H1 (cell line): ENCODE measurements at regions of chr11 and their contacts with region 1.

Region 1: GRCh38 chr11:7442588-7443215 is 42.6 kb upstream of the OLFML1 start:
- DNase-seq: peak; percentile 70 to 91
- H3K4me3 ChIP-seq: no peak overlapping the region
- H3K27ac ChIP-seq: no peak overlapping the region
- H3K4me1 ChIP-seq: no peaks in the 10 kb centered on the region
- H3K27me3 ChIP-seq: peaks cover 0 to 1% (median 0%) of the 10 kb centered on the region in 4 experiments; a peak in 3 of 7 replicates
- CTCF ChIP-seq: peak; percentile 83 to 90 (median 89)
- EP300 ChIP-seq: no peak
- POLR2A ChIP-seq: no peak
- RAD21 ChIP-seq: peak; percentile 98 to 99

Region 2: DNA sequence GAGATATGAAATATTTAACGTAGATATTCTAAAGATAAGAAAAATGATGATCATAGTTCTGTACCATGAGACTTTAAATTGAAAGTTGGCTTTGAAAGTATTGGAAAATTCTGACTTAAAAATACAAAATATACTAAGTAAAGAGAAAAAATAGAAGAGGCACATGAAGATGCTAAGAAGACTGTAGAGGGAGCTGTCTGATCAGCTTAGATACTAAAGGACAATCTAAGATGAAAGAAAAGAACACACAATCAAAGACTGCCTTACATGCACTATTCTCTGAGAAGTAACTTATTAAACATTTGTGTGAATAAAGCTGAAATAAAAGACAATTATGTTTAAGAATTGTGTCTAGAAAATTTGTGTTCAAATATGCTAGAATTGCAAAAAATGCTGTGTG is 298.8 kb before region 1 on chr11:
- CTCF ChIA-PET with region 1: interaction called, 29 read pairs
- POLR2A ChIA-PET with region 1: no interaction called
- DNase-seq: no peak
- H3K4me3 ChIP-seq: no peak overlapping the region
- H3K27ac ChIP-seq: no peak overlapping the region
- H3K4me1 ChIP-seq: no peaks in the 10 kb centered on the region
- H3K27me3 ChIP-seq: no peaks in the 10 kb centered on the region
- CTCF ChIP-seq: peak in 2 of 3 experiments; percentile 28 to 38; a peak in 2 of 4 replicates
- EP300 ChIP-seq: no peak
- POLR2A ChIP-seq: no peak
- RAD21 ChIP-seq: peak; percentile 65 to 78

Region 3: GRCh38 chr11:7353100-7353499 is 89.6 kb before region 1 on chr11:
- CTCF ChIA-PET with region 1: interaction called, 171 read pairs
- POLR2A ChIA-PET with region 1: no interaction called
- DNase-seq: peak in 1 of 2 experiments; percentile 60
- H3K4me3 ChIP-seq: 0 out of 8 replicates have a peak overlapping the region, but pooled peaks of 1 of the 4 experiments have one; percentile 3
- H3K27ac ChIP-seq: no peak overlapping the region
- H3K4me1 ChIP-seq: peaks cover 0 to 4% (median 1%) of the 10 kb centered on the region in 4 experiments; a peak in 3 of 7 replicates
- H3K27me3 ChIP-seq: peaks cover 0 to 1% (median 0%) of the 10 kb centered on the region in 4 experiments; a peak in 1 of 7 replicates
- CTCF ChIP-seq: peak; percentile 32 to 81 (median 69)
- EP300 ChIP-seq: no peak
- POLR2A ChIP-seq: no peak
- RAD21 ChIP-seq: peak; percentile 74 to 80

Region 4: GRCh38 chr11:7422544-7423331 is 20.0 kb before region 1 on chr11:
- CTCF ChIA-PET with region 1: interaction called, 31 read pairs
- POLR2A ChIA-PET with region 1: no interaction called
- DNase-seq: no peak
- H3K4me3 ChIP-seq: no peak overlapping the region
- H3K27ac ChIP-seq: no peak overlapping the region
- H3K4me1 ChIP-seq: peaks cover 0 to 2% (median 0%) of the 10 kb centered on the region in 4 experiments; a peak in 1 of 7 replicates
- H3K27me3 ChIP-seq: no peaks in the 10 kb centered on the region
- CTCF ChIP-seq: no peak
- EP300 ChIP-seq: no peak
- POLR2A ChIP-seq: no peak
- RAD21 ChIP-seq: no peak

Region 5: DNA sequence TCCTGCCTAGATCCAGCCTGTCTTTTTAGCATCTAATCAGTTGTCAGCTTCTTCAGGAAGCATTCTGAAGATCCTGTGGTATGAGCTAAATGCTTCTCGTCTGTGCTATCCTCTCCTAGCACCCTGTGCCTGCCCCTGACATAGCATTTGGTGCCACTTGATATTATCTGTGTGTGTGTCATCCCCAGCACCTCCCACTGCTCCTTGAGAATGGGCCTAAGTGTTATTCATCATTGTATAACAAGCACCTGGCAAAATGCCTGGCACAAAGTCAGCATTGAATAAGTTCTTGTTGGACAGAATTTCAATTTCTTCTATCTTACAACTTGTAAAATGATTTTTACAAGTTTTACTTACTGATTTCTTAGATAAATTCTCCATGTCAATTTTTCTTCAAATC is 14.5 kb after region 1 on chr11:
- CTCF ChIA-PET with region 1: interaction called, 32 read pairs
- POLR2A ChIA-PET with region 1: no interaction called
- DNase-seq: no peak
- H3K4me3 ChIP-seq: no peak overlapping the region
- H3K27ac ChIP-seq: no peak overlapping the region
- H3K4me1 ChIP-seq: no peaks in the 10 kb centered on the region
- H3K27me3 ChIP-seq: no peaks in the 10 kb centered on the region
- CTCF ChIP-seq: no peak
- EP300 ChIP-seq: no peak
- POLR2A ChIP-seq: no peak
- RAD21 ChIP-seq: no peak

Region 6: DNA sequence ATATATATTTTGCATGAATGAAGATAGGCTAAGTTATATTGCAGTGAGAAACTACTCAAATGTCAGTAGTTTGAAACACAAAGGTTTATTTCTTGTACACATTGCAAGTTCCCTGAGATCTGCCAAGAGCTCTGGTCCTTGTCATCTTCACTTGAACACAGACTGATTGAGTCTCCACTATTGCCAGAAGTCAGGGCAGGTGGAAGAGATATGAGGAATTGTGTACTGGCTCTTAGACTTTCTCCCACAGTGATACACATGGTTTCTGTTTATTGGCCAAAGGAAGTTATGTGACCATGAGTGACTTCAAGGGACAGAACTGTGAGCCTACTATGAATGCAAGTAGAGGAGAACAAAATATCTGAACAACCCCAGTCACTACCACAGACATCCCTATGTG is 115.3 kb after region 1 on chr11:
- CTCF ChIA-PET with region 1: no interaction called
- POLR2A ChIA-PET with region 1: no interaction called
- DNase-seq: no peak
- H3K4me3 ChIP-seq: no peak overlapping the region
- H3K27ac ChIP-seq: no peak overlapping the region
- H3K4me1 ChIP-seq: peaks cover 0 to 3% (median 0%) of the 10 kb centered on the region in 4 experiments; a peak in 2 of 7 replicates
- H3K27me3 ChIP-seq: no peaks in the 10 kb centered on the region
- CTCF ChIP-seq: no peak
- EP300 ChIP-seq: no peak
- POLR2A ChIP-seq: no peak
- RAD21 ChIP-seq: no peak

Region 7: GRCh38 chr11:7665473-7666291 is 223.0 kb after region 1 on chr11:
- CTCF ChIA-PET with region 1: interaction called, 10 read pairs
- POLR2A ChIA-PET with region 1: no interaction called
- DNase-seq: peak in 1 of 2 experiments; percentile 90
- H3K4me3 ChIP-seq: no peak overlapping the region
- H3K27ac ChIP-seq: no peak overlapping the region
- H3K4me1 ChIP-seq: no peaks in the 10 kb centered on the region
- H3K27me3 ChIP-seq: no peaks in the 10 kb centered on the region
- CTCF ChIP-seq: peak; percentile 80 to 92 (median 87)
- EP300 ChIP-seq: no peak
- POLR2A ChIP-seq: no peak
- RAD21 ChIP-seq: peak; percentile 84 to 88